Natural killer cell (primary cell): ENCODE measurements at regions of chr12 and their contacts with region 1.

Region 1: GRCh38 chr12:42372154-42372791 is 46.3 kb downstream of the PPHLN1 start:
- DNase-seq: peak in 1 of 2 donors; percentile 75
- ATAC-seq: peak; percentile 83 to 97 (median 92)
- H3K4me3 ChIP-seq: no peak overlapping the region
- H3K4me3 Mint-ChIP-seq: no peak overlapping the region
- H3K27ac ChIP-seq: no peak overlapping the region
- H3K27ac Mint-ChIP-seq: no peak overlapping the region
- H3K4me1 ChIP-seq: no peaks in the 10 kb centered on the region
- H3K4me1 Mint-ChIP-seq: peaks cover 7 to 14% of the 10 kb centered on the region in 2 donors
- H3K27me3 ChIP-seq: no peaks in the 10 kb centered on the region
- H3K27me3 Mint-ChIP-seq: no peaks in the 10 kb centered on the region
- CTCF ChIP-seq: peak; percentile 71

Region 2: GRCh38 chr12:41277116-41277945 is 1094.9 kb before region 1 on chr12:
- intact Hi-C with region 1: loop called (anchors 5 kb)
- DNase-seq: peak in 1 of 2 donors; percentile 41
- ATAC-seq: no peak
- H3K4me3 ChIP-seq: no peak overlapping the region
- H3K4me3 Mint-ChIP-seq: no peak overlapping the region
- H3K27ac ChIP-seq: no peak overlapping the region
- H3K27ac Mint-ChIP-seq: no peak overlapping the region
- H3K4me1 ChIP-seq: no peaks in the 10 kb centered on the region
- H3K4me1 Mint-ChIP-seq: no peaks in the 10 kb centered on the region
- H3K27me3 ChIP-seq: no peaks in the 10 kb centered on the region
- H3K27me3 Mint-ChIP-seq: no peaks in the 10 kb centered on the region
- CTCF ChIP-seq: peak; percentile 24

Region 3: GRCh38 chr12:42129595-42130204 is 242.6 kb before region 1 on chr12:
- intact Hi-C with region 1: loop called (anchors 1 kb)
- DNase-seq: peak in 1 of 2 donors; percentile 63
- ATAC-seq: peak in 2 of 3 donors; percentile 39 to 41
- H3K4me3 ChIP-seq: no peak overlapping the region
- H3K4me3 Mint-ChIP-seq: no peak overlapping the region
- H3K27ac ChIP-seq: no peak overlapping the region
- H3K27ac Mint-ChIP-seq: no peak overlapping the region
- H3K4me1 ChIP-seq: no peaks in the 10 kb centered on the region
- H3K4me1 Mint-ChIP-seq: peaks cover 29 to 41% of the 10 kb centered on the region in 2 donors
- H3K27me3 ChIP-seq: no peaks in the 10 kb centered on the region
- H3K27me3 Mint-ChIP-seq: no peaks in the 10 kb centered on the region
- CTCF ChIP-seq: peak; percentile 22